H1 (cell line): ENCODE measurements at regions of chr2 and their contacts with region 1.

Region 1: GRCh38 chr2:165203689-165204559 is at the start of gene SCN3A:
- DNase-seq: no peak
- H3K4me3 ChIP-seq: no peak within 1 kb of the TSS
- H3K27ac ChIP-seq: no peak within 1 kb of the TSS
- H3K4me1 ChIP-seq: no peaks in the 10 kb centered on the region
- H3K27me3 ChIP-seq: no peaks in the 10 kb centered on the region
- CTCF ChIP-seq: peak in 2 of 3 experiments; percentile 76 to 80; a peak in 3 of 4 replicates
- EP300 ChIP-seq: no peak
- POLR2A ChIP-seq: no peak
- RAD21 ChIP-seq: peak; percentile 83 to 86
- total RNA-seq, gene SCN3A: not detected in 2 replicates

Region 2: GRCh38 chr2:164992818-164993217 is 211.1 kb before region 1 on chr2:
- CTCF ChIA-PET with region 1: interaction called, 20 read pairs
- POLR2A ChIA-PET with region 1: no interaction called
- DNase-seq: no peak
- H3K4me3 ChIP-seq: no peak overlapping the region
- H3K27ac ChIP-seq: no peak overlapping the region
- H3K4me1 ChIP-seq: no peaks in the 10 kb centered on the region
- H3K27me3 ChIP-seq: no peaks in the 10 kb centered on the region
- CTCF ChIP-seq: peak in 2 of 3 experiments; percentile 47 to 48; a peak in 2 of 4 replicates
- EP300 ChIP-seq: no peak
- POLR2A ChIP-seq: no peak
- RAD21 ChIP-seq: peak; percentile 74 to 80

Region 3: DNA sequence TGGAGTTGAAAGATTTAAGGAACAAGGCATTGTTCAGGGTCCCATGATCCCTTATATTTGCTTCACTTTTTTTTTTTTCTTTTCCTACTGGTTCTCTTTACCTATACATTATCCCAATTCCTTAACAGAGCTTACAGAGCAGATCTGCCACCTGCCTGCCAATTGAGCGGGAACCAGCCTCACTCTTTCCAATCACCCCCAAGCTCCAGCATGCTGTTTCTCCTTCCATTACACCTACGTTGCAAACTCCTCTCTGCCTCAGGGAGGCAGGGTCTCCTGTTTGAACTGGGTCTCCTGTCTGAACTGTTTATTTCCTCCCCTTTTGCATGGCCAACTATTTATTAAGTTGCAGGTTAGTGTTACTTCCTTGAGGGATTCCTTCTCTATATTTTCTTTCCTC is 171.4 kb before region 1 on chr2:
- CTCF ChIA-PET with region 1: interaction called, 10 read pairs
- POLR2A ChIA-PET with region 1: no interaction called
- DNase-seq: no peak
- H3K4me3 ChIP-seq: no peak overlapping the region
- H3K27ac ChIP-seq: no peak overlapping the region
- H3K4me1 ChIP-seq: no peaks in the 10 kb centered on the region
- H3K27me3 ChIP-seq: no peaks in the 10 kb centered on the region
- CTCF ChIP-seq: no peak
- EP300 ChIP-seq: no peak
- POLR2A ChIP-seq: no peak
- RAD21 ChIP-seq: peak; percentile 13 to 28; a peak in 3 of 4 replicates

Region 4: DNA sequence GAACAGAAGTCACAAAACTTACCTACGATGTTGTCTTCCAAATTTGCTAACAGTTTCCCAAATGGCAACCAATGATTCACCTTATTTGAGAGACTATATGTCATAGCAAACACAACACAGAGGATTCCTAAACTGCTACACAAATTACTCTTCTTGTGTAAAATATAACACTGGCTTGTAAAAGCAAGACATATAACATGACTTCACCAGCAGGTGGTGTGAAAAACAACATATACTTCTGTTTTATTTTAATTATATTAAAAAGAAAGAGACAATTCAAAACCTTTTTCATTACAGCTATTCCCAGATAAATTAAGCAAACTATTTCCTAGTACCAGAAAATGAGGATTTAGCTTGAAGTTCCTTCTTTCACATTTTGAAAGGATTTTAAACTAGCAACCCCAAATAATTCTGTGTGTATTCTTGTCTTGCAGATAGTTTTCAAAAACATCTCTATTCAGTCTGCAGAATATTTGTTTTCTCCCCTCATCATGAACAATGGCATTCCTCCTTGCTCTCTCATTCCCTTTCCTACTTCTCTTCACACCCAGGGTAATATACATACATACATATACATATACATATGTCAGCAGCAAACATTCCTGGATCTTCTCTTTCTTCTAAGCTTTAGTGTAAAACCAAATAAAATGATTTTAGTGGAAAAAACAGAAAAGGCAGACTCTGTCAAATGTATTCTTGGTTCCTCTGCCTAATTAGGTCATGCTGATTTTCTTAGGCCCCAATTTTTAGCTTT is 62.1 kb before region 1 on chr2:
- CTCF ChIA-PET with region 1: interaction called, 10 read pairs
- POLR2A ChIA-PET with region 1: no interaction called
- DNase-seq: no peak
- H3K4me3 ChIP-seq: no peak overlapping the region
- H3K27ac ChIP-seq: no peak overlapping the region
- H3K4me1 ChIP-seq: no peaks in the 10 kb centered on the region
- H3K27me3 ChIP-seq: no peaks in the 10 kb centered on the region
- CTCF ChIP-seq: no peak
- EP300 ChIP-seq: no peak
- POLR2A ChIP-seq: no peak
- RAD21 ChIP-seq: no peak

Region 5: DNA sequence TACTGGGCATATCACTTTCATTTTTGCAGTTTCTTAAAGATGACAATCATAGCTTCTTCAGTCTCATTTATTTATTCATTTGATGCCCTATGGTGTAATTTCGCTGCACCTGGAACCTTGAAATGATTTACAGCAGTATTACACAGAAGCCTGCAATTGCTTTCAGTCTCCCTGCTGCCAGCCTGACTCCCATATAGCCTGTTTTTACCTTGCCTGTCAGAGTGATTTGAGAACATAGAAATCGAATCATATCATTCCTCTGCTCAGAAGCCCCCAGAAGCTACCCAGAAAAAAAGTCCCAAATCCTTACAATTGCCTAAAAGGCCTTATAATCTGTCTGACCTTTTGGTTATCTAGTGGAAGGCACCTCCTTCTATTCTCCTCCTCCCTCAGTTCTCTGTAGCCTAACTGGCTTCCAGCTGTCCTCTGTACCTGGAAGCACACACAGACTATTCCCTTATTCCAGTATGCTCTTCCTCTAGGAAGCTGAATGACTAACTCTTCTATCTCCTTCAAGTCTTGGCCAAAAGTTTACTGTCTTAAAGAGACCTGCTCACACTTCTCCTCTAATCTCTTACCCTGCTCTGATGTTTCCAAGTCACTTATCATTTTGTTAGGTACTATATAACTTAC is 12.7 kb before region 1 on chr2:
- CTCF ChIA-PET with region 1: interaction called, 10 read pairs
- POLR2A ChIA-PET with region 1: no interaction called
- DNase-seq: no peak
- H3K4me3 ChIP-seq: no peak overlapping the region
- H3K27ac ChIP-seq: no peak overlapping the region
- H3K4me1 ChIP-seq: no peaks in the 10 kb centered on the region
- H3K27me3 ChIP-seq: no peaks in the 10 kb centered on the region
- CTCF ChIP-seq: no peak
- EP300 ChIP-seq: no peak
- POLR2A ChIP-seq: no peak
- RAD21 ChIP-seq: no peak

Region 6: DNA sequence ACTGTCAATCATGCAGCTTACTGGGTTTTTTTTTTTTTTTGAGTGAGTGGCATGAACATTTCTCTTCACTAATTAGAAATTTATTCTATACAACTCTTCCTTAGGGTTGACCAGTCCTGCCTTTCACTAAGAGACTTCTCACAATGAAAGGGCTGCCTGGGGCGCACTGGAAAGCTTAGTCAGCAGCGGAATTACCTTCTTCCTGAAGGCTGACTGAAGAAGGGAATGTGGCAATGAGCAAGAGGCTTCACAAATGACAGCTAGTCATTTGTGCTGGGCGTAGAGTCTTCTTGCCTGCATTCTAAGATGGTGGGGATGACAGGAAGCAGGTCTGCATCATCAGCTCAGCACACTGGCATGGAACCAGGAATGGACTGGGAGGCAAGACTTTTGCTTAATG is 15.6 kb after region 1 on chr2:
- CTCF ChIA-PET with region 1: interaction called, 21 read pairs
- POLR2A ChIA-PET with region 1: no interaction called
- DNase-seq: no peak
- H3K4me3 ChIP-seq: no peak overlapping the region
- H3K27ac ChIP-seq: no peak overlapping the region
- H3K4me1 ChIP-seq: no peaks in the 10 kb centered on the region
- H3K27me3 ChIP-seq: no peaks in the 10 kb centered on the region
- CTCF ChIP-seq: no peak
- EP300 ChIP-seq: no peak
- POLR2A ChIP-seq: no peak
- RAD21 ChIP-seq: no peak